ENCODE measurements at regions of chr5 and their contacts with region 1.

Region 1: GRCh38 chr5:68041293-68041692 is 174.3 kb upstream of the PIK3R1 start:
- DNase-seq: peak in 1 of 35 experiments; percentile 1
- ATAC-seq: no peak
- H3K4me3 ChIP-seq: no peak overlapping the region
- H3K4me3 Mint-ChIP-seq: no peak overlapping the region
- H3K27ac ChIP-seq: no peak overlapping the region
- H3K27ac Mint-ChIP-seq: no peak overlapping the region
- H3K4me1 ChIP-seq: no peaks in the 10 kb centered on the region
- H3K4me1 Mint-ChIP-seq: no peaks in the 10 kb centered on the region
- H3K27me3 ChIP-seq: no peaks in the 10 kb centered on the region
- H3K27me3 Mint-ChIP-seq: no peaks in the 10 kb centered on the region

Region 2: GRCh38 chr5:67283275-67283987 is 757.9 kb before region 1 on chr5:
- CTCF ChIA-PET with region 1: no interaction called
- POLR2A ChIA-PET with region 1: interaction called in 1 of 2 experiments, 11 read pairs
- DNase-seq: no peak
- ATAC-seq: no peak
- H3K4me3 ChIP-seq: no peak overlapping the region
- H3K4me3 Mint-ChIP-seq: no peak overlapping the region
- H3K27ac ChIP-seq: no peak overlapping the region
- H3K27ac Mint-ChIP-seq: no peak overlapping the region
- H3K4me1 ChIP-seq: no peaks in the 10 kb centered on the region
- H3K4me1 Mint-ChIP-seq: no peaks in the 10 kb centered on the region
- H3K27me3 ChIP-seq: peaks cover 0 to 2% of the 10 kb centered on the region in 2 experiments
- H3K27me3 Mint-ChIP-seq: no peaks in the 10 kb centered on the region

Region 3: GRCh38 chr5:67998709-67999261 is 42.5 kb before region 1 on chr5:
- CTCF ChIA-PET with region 1: no interaction called
- POLR2A ChIA-PET with region 1: interaction called in 1 of 2 experiments, 10 read pairs
- DNase-seq: peak in 2 of 35 experiments; percentile 17 to 29
- ATAC-seq: no peak
- H3K4me3 ChIP-seq: no peak overlapping the region
- H3K4me3 Mint-ChIP-seq: no peak overlapping the region
- H3K27ac ChIP-seq: no peak overlapping the region
- H3K27ac Mint-ChIP-seq: no peak overlapping the region
- H3K4me1 ChIP-seq: no peaks in the 10 kb centered on the region
- H3K4me1 Mint-ChIP-seq: no peaks in the 10 kb centered on the region
- H3K27me3 ChIP-seq: no peaks in the 10 kb centered on the region
- H3K27me3 Mint-ChIP-seq: peaks cover 0 to 4% of the 10 kb centered on the region in 2 donors

Region 4: GRCh38 chr5:68054638-68055037 is 13.3 kb after region 1 on chr5:
- CTCF ChIA-PET with region 1: no interaction called
- POLR2A ChIA-PET with region 1: no interaction called
- DNase-seq: no peak
- ATAC-seq: no peak
- H3K4me3 ChIP-seq: no peak overlapping the region
- H3K4me3 Mint-ChIP-seq: no peak overlapping the region
- H3K27ac ChIP-seq: no peak overlapping the region
- H3K27ac Mint-ChIP-seq: no peak overlapping the region
- H3K4me1 ChIP-seq: no peaks in the 10 kb centered on the region
- H3K4me1 Mint-ChIP-seq: no peaks in the 10 kb centered on the region
- H3K27me3 ChIP-seq: no peaks in the 10 kb centered on the region
- H3K27me3 Mint-ChIP-seq: peaks cover 4 to 6% of the 10 kb centered on the region in 2 donors

Region 5: DNA sequence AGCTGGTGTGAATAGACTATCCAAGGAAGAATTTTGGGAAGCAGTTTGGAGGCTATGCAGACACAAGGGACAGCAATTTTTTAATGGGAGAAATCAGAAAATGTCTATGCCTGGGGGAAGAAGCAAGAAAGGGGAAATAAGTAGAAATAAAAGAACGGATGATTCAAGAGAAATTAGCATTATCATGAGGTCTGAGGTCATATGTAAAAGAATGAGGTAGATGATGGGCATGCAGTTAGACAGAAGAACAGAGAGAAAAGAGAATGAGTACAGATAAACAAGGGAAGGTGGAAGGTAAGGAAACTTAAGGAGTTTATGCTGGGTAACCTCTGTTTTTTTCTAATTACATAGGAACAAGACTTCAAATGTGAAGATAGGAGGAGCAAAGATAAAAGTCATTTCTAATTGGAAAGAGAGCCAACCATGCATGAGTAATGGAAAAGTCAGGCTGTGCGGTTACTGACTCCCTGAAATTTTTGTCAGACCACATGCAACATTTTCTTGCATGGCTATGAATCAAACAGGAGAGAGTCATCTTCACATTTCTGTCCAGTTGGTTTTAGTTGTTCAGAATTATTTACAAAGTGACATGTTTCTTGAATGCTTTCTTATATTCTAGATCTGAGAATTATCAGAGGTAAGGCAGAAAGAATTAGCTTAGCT is 73.2 kb after region 1 on chr5:
- CTCF ChIA-PET with region 1: no interaction called
- POLR2A ChIA-PET with region 1: no interaction called
- DNase-seq: no peak
- ATAC-seq: no peak
- H3K4me3 ChIP-seq: no peak overlapping the region
- H3K4me3 Mint-ChIP-seq: no peak overlapping the region
- H3K27ac ChIP-seq: no peak overlapping the region
- H3K27ac Mint-ChIP-seq: no peak overlapping the region
- H3K4me1 ChIP-seq: no peaks in the 10 kb centered on the region
- H3K4me1 Mint-ChIP-seq: peaks cover under 1 to 3% (median 3%) of the 10 kb centered on the region in 3 donors
- H3K27me3 ChIP-seq: no peaks in the 10 kb centered on the region
- H3K27me3 Mint-ChIP-seq: peaks cover 0 to 4% of the 10 kb centered on the region in 2 donors

Region 6: GRCh38 chr5:68159224-68159951 is 118.1 kb after region 1 on chr5:
- CTCF ChIA-PET with region 1: no interaction called
- POLR2A ChIA-PET with region 1: interaction called in 1 of 2 experiments, 12 read pairs
- DNase-seq: no peak
- ATAC-seq: no peak
- H3K4me3 ChIP-seq: no peak overlapping the region
- H3K4me3 Mint-ChIP-seq: no peak overlapping the region
- H3K27ac ChIP-seq: no peak overlapping the region
- H3K27ac Mint-ChIP-seq: no peak overlapping the region
- H3K4me1 ChIP-seq: no peaks in the 10 kb centered on the region
- H3K4me1 Mint-ChIP-seq: no peaks in the 10 kb centered on the region
- H3K27me3 ChIP-seq: no peaks in the 10 kb centered on the region
- H3K27me3 Mint-ChIP-seq: no peaks in the 10 kb centered on the region

Region 7: DNA sequence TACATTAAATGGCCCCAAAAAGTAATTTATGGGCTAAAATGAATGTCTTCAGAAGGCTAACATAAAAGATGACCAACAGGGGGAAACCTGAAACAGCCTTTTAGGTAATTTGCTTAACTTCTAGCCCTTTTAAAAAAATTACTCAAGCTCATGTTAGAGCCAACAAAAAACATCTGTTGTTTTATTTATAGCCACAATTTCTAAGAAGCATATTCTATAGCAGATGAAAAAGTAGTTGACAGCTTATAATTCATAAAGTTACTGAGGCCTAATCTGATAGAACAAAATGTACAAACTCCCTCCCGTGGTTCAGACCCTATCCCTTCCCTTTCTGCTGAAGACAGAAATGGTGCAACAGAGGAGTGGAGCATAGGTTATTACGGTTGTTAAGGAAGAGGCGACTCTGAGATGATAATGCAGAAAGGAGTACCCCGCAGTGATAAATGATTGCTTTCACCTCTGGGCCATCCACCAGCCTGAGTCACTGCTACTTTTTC is 220.3 kb after region 1 on chr5:
- CTCF ChIA-PET with region 1: interaction called in 1 of 2 experiments, 10 read pairs
- POLR2A ChIA-PET with region 1: no interaction called
- DNase-seq: no peak
- ATAC-seq: no peak
- H3K4me3 ChIP-seq: no peak overlapping the region
- H3K4me3 Mint-ChIP-seq: no peak overlapping the region
- H3K27ac ChIP-seq: peak overlapping the region; percentile 28
- H3K27ac Mint-ChIP-seq: peak overlapping the region; percentile 69 to 81
- H3K4me1 ChIP-seq: peaks cover 33 to 50% of the 10 kb centered on the region in 2 experiments
- H3K4me1 Mint-ChIP-seq: peaks cover 82 to 90% (median 87%) of the 10 kb centered on the region in 3 donors
- H3K27me3 ChIP-seq: no peaks in the 10 kb centered on the region
- H3K27me3 Mint-ChIP-seq: no peaks in the 10 kb centered on the region

Measured in T-cell (primary cell).